ENCODE measurements at regions of chr22 and their contacts with region 1.

Region 1: DNA sequence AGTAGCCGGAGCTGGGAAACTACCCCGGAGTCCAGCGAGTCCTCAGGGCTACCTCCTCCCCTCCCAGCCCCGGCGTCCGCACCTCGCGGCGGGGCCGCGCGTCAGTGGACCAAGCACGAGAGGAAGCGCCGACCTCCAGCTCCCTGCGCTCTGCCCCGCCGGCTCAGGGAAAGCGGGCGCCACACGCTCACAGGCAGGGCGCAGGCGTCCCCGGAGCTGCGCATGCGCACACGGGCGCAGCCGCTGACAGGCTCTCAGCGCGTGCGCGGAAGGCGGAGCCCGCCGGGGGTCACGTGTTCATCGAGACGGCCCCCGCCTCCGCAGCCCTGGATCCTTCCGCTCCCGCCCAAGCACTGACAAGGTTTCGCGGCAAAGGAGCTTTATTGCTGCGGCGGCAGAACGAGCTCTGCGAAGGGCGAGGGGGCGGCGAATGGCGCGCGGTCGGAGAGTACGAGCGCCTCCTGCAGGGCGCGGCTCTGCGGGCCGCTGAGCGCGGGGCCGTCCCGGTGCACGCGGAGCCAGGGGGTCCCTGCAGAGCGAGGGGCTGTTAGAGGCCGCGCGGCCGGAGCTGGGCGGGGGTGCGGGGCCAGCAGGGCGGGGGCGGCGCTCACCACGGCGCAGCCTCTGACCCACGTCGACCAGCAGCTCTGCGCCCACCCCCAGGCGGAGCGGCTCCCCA is at the start of gene SCO2:
- DNase-seq: peak; percentile 93 to 99 (median 96)
- ATAC-seq: peak; percentile 70 to 74 (median 74)
- H3K4me3 ChIP-seq: peak within 1 kb of the TSS; percentile 62 to 66
- H3K4me3 Mint-ChIP-seq: peak within 1 kb of the TSS; percentile 83 to 87 (median 84)
- H3K27ac ChIP-seq: peak within 1 kb of the TSS; percentile 93
- H3K27ac Mint-ChIP-seq: peak within 1 kb of the TSS; percentile 78 to 89
- H3K4me1 ChIP-seq: peaks cover 8 to 52% of the 10 kb centered on the region in 2 experiments
- H3K4me1 Mint-ChIP-seq: peaks cover 28 to 33% (median 29%) of the 10 kb centered on the region in 3 donors
- H3K27me3 ChIP-seq: peaks cover 0 to 4% of the 10 kb centered on the region in 2 experiments
- H3K27me3 Mint-ChIP-seq: no peaks in the 10 kb centered on the region
- total RNA-seq, gene SCO2: 3.3 to 5.6 (median 4.0) TPM

Region 2: DNA sequence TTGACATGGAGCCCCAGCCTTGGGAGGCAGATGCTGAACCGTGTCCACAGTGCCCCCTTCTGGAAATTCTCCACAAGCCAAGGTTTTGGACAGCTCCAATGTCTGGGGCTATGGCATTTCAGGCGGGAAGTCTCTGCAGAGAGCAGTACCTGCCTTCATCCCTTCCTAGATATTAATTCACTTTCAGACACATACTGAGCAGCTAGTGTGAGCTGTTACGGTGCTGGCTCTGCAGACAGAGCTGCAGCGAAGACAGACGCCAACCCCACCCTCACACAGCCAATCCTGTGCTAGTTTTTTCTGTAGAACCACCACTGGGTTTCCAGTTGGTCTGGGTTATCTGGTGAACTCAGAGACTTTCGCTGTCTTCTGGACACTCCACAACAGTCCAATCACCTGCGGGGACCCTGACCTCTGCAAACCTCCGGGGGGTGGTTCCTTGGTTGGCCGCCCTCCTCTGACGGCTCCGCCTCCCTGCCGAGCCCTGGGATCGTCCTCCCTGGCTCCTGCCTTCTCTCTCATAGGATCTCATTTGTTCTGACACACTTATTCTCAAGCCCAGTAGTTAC is 27.1 kb before region 1 on chr22:
- CTCF ChIA-PET with region 1: interaction called in 1 of 2 experiments, 15 read pairs
- POLR2A ChIA-PET with region 1: no interaction called
- DNase-seq: peak in 34 of 35 experiments; percentile 21 to 85 (median 62)
- ATAC-seq: peak; percentile 76 to 96 (median 92)
- H3K4me3 ChIP-seq: no peak overlapping the region
- H3K4me3 Mint-ChIP-seq: no peak overlapping the region
- H3K27ac ChIP-seq: no peak overlapping the region
- H3K27ac Mint-ChIP-seq: no peak overlapping the region
- H3K4me1 ChIP-seq: peaks cover 0 to 9% of the 10 kb centered on the region in 2 experiments
- H3K4me1 Mint-ChIP-seq: peaks cover 2 to 5% (median 2%) of the 10 kb centered on the region in 3 donors
- H3K27me3 ChIP-seq: no peaks in the 10 kb centered on the region
- H3K27me3 Mint-ChIP-seq: no peaks in the 10 kb centered on the region

Region 3: GRCh38 chr22:50537765-50538164 is 12.2 kb after region 1 on chr22:
- CTCF ChIA-PET with region 1: interaction called, 8 to 70 read pairs
- POLR2A ChIA-PET with region 1: interaction called, 3 to 21 read pairs
- DNase-seq: no peak
- ATAC-seq: no peak
- H3K4me3 ChIP-seq: no peak overlapping the region
- H3K4me3 Mint-ChIP-seq: peak overlapping the region; percentile 9 to 50 (median 25)
- H3K27ac ChIP-seq: peak overlapping the region; percentile 98
- H3K27ac Mint-ChIP-seq: peak overlapping the region; percentile 82 to 99
- H3K4me1 ChIP-seq: peaks cover 6 to 23% of the 10 kb centered on the region in 2 experiments
- H3K4me1 Mint-ChIP-seq: peaks cover 47 to 69% (median 64%) of the 10 kb centered on the region in 3 donors
- H3K27me3 ChIP-seq: no peaks in the 10 kb centered on the region
- H3K27me3 Mint-ChIP-seq: no peaks in the 10 kb centered on the region

Region 4: DNA sequence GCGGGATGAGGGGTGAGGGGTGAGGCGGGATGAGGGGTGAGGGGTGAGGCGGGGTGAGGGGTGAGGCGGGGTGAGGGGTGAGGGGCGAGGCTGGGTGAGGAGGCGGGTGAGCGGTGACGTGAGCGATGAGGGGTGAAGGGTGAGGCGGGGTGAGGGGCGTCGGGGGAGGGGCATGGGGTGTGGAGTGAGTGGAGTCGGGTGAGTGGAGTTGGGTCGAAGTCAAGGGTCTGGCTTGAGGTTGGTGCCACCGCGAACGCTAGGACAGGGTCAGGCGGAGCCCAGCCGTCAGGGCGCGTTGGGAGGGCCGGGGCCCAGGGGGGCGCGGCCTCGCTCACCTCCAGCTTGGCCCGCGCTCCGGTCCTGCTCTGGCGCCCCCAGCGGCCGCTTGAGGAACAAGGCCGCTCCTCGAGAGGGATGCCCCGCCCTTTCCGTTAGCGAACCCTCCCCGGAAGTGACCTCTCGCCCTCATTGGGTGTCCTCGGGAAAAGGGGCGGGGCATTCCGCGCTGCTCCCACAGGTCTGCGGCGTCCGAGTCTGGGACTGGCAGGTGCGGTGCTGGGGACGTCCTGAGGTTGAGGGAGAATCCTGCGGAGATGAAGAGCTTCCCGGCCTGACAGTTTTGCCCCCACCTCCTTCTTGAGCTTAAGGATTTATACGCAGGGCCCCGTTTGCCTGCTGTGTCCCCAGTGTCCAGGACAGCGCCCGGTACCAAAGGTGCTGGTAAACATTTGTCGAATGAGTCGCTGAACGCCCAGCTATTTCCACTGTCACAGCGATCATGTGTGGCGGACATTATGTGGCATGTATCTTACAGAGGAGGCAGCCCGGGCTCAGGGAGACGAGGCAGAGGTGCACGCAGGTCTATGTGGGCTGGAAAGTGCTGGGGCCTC is 37.2 kb after region 1 on chr22 and contains the start of gene SYCE3:
- CTCF ChIA-PET with region 1: interaction called in 1 of 2 experiments, 15 read pairs
- POLR2A ChIA-PET with region 1: interaction called in 1 of 2 experiments, 4 read pairs
- DNase-seq: peak; percentile 89 to 98 (median 96)
- ATAC-seq: peak; percentile 93 to 98 (median 95)
- H3K4me3 ChIP-seq: peak within 1 kb of the TSS; percentile 81 to 83
- H3K4me3 Mint-ChIP-seq: peak within 1 kb of the TSS; percentile 90 to 93 (median 90)
- H3K27ac ChIP-seq: peak within 1 kb of the TSS; percentile 52
- H3K27ac Mint-ChIP-seq: peak within 1 kb of the TSS; percentile 88 to 89
- H3K4me1 ChIP-seq: peaks cover 0 to 17% of the 10 kb centered on the region in 2 experiments
- H3K4me1 Mint-ChIP-seq: peaks cover 17 to 20% (median 17%) of the 10 kb centered on the region in 3 donors
- H3K27me3 ChIP-seq: peaks cover 0 to 5% of the 10 kb centered on the region in 2 experiments
- H3K27me3 Mint-ChIP-seq: no peaks in the 10 kb centered on the region
- total RNA-seq, gene SYCE3: not detected

Measured in T-cell (primary cell).